HepG2 (cell line): ENCODE measurements at regions of chr4 and their contacts with region 1.

Region 1: GRCh38 chr4:71941001-71941400 is 90.8 kb upstream of the NPFFR2 start:
- DNase-seq: peak; percentile 1
- ATAC-seq: no peak
- H3K4me3 ChIP-seq: no peak overlapping the region
- H3K27ac ChIP-seq: no peak overlapping the region
- H3K4me1 ChIP-seq: no peaks in the 10 kb centered on the region
- H3K27me3 ChIP-seq: no peaks in the 10 kb centered on the region
- CTCF ChIP-seq: peak; percentile 29
- EP300 ChIP-seq: no peak
- POLR2A ChIP-seq: no peak
- RAD21 ChIP-seq: no peak; the same call in 1 of the 2 replicates

Region 2: GRCh38 chr4:71772592-71772991 is 168.4 kb before region 1 on chr4:
- CTCF ChIA-PET with region 1: no interaction called
- POLR2A ChIA-PET with region 1: no interaction called
- in situ Hi-C with region 1: no loop called
- intact Hi-C with region 1: loop called (anchors 1 kb)
- DNase-seq: no peak
- ATAC-seq: no peak
- H3K4me3 ChIP-seq: no peak overlapping the region
- H3K27ac ChIP-seq: no peak overlapping the region
- H3K4me1 ChIP-seq: peaks cover 20% of the 10 kb centered on the region
- H3K27me3 ChIP-seq: no peaks in the 10 kb centered on the region
- CTCF ChIP-seq: peak; percentile 4; the same call in 1 of the 2 replicates
- EP300 ChIP-seq: no peak
- POLR2A ChIP-seq: no peak
- RAD21 ChIP-seq: no peak

Region 3: DNA sequence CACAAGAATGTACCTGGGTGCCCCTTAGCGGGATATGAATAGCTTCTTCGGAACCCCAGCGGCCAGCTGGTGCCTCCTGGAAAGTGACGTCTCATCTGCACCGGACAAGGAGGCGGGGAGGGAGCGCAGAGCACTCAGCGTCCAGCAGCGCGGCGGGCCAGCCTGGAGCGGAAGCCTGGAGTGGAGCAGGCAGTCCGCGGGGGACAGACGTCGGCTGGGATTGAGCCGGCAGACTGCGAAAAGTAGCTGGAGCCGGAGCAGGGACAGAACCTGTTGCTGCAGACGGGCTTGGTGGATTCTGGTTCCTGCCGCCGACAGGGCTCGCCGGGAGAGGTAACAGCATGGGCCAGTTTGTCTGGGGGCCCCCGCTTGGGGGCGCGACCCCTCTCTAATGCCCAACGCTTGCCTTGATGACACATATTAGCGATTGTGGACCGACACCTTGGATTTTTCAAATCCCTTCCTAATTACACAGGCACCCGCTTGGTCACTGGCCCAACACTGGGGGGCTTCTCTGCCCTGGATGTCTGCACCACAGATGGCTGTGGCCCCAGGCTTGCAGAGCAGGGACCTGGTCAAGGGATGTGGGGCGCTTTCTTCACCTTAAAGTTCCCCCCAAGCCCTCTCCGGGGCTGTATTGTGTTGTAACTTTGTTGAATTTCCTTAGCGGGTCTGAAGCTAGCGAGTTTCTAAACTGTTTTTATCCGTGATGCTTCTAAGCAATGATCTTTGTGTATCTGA is 91.0 kb after region 1 on chr4 and contains the start of gene NPFFR2:
- CTCF ChIA-PET with region 1: no interaction called
- POLR2A ChIA-PET with region 1: no interaction called
- in situ Hi-C with region 1: no loop called
- intact Hi-C with region 1: no loop called
- DNase-seq: no peak
- ATAC-seq: peak; percentile 67
- H3K4me3 ChIP-seq: no peak within 1 kb of the TSS
- H3K27ac ChIP-seq: no peak within 1 kb of the TSS
- H3K4me1 ChIP-seq: no peaks in the 10 kb centered on the region
- H3K27me3 ChIP-seq: peaks cover 0 to 7% of the 10 kb centered on the region in 2 experiments; a peak in 1 of 5 replicates
- CTCF ChIP-seq: no peak
- EP300 ChIP-seq: no peak
- POLR2A ChIP-seq: no peak
- RAD21 ChIP-seq: no peak
- total RNA-seq, gene NPFFR2: not detected in 2 replicates

Region 4: GRCh38 chr4:72243641-72244040 is 302.6 kb after region 1 on chr4:
- CTCF ChIA-PET with region 1: no interaction called
- POLR2A ChIA-PET with region 1: no interaction called
- in situ Hi-C with region 1: no loop called
- intact Hi-C with region 1: no loop called
- DNase-seq: no peak
- ATAC-seq: no peak
- H3K4me3 ChIP-seq: no peak overlapping the region
- H3K27ac ChIP-seq: no peak overlapping the region
- H3K4me1 ChIP-seq: no peaks in the 10 kb centered on the region
- H3K27me3 ChIP-seq: no peaks in the 10 kb centered on the region
- CTCF ChIP-seq: no peak
- EP300 ChIP-seq: no peak
- POLR2A ChIP-seq: no peak
- RAD21 ChIP-seq: no peak

Region 5: GRCh38 chr4:73923631-73923937 is 1982.6 kb after region 1 on chr4:
- CTCF ChIA-PET with region 1: no interaction called
- POLR2A ChIA-PET with region 1: no interaction called
- in situ Hi-C with region 1: no loop called
- intact Hi-C with region 1: no loop called
- DNase-seq: no peak
- ATAC-seq: no peak
- H3K4me3 ChIP-seq: no peak overlapping the region
- H3K27ac ChIP-seq: no peak overlapping the region
- H3K4me1 ChIP-seq: no peaks in the 10 kb centered on the region
- H3K27me3 ChIP-seq: no peaks in the 10 kb centered on the region
- CTCF ChIP-seq: no peak
- EP300 ChIP-seq: no peak
- POLR2A ChIP-seq: no peak
- RAD21 ChIP-seq: no peak